Activated B cell treated with CpG ODN at 0.5 μM for 24 hours (primary cell): ENCODE measurements at regions of chr12 and their contacts with region 1.

Region 1: DNA sequence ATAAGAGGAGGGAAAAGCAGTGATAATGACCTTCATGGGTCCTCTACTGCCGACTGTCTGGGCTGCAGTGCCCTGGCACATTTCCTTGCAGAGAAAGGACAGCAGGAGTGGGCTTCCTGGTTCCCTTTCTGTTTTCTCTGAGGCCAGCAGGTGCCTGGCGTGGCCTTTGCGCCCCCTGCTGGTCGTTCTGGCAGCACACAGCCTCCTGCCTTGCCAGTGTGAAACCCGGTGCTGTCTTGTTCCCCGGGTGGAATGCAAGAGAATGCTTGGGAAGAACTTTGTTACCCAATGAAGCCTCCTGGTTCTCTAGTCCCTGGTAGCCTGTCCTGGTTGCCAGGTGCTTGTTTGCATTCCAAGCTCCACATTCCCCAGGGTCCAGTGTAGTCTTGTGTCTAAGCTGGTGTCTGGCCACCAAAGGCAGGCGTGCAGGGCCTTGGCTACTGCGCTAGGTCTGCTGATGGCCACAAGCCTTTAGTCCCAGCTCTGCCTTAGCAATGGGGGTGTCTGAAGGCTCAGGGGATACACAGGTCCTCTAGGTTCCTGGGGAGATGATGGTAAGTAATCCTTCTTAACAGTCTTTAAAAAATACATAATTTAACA is 1392.4 kb upstream of the TMEM132C start:
- DNase-seq: peak; percentile 41
- ATAC-seq: no peak
- H3K4me3 Mint-ChIP-seq: no peak overlapping the region
- H3K27ac Mint-ChIP-seq: no peak overlapping the region
- H3K4me1 Mint-ChIP-seq: no peaks in the 10 kb centered on the region
- H3K27me3 Mint-ChIP-seq: no peaks in the 10 kb centered on the region
- CTCF ChIP-seq: peak; percentile 35

Region 2: DNA sequence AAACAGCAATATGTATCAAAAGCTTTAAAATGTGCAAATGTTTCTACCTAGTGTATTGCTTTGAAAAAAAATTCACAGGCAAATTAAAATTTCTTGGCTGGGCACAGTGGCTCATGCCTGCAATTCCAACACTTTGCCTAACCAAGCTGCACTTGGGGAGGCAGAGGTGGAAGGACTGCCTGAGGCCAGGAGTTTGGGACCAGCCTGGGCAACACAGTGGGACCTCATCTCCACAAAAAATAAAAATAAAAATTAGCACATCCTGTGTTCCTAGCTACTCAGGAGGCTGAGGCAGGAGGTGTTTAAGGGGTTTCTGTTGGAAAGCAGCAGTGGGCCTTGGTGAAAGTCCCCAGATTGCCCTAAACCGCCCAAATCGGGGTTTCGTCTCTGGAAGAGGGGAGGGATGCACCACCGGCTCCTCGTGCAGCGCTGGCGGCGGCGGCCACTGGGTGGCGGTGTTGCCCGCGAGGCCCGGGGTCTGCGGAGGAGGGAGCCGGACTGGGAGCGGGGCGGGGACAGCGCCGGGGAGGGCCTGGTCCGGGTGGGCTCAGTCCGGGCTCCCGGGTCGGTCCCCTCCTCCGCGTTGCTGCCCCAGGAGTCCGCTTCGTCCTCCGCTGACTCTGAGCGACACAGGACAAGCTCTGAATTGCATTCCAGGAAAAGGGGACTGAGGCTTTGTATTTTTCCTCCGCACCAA is 1543.7 kb before region 1 on chr12:
- CTCF ChIA-PET with region 1: interaction called, 3 read pairs
- POLR2A ChIA-PET with region 1: no interaction called
- intact Hi-C with region 1: loop called (anchors 5 kb)
- DNase-seq: peak; percentile 37
- ATAC-seq: peak; percentile 49
- H3K4me3 Mint-ChIP-seq: no peak overlapping the region
- H3K27ac Mint-ChIP-seq: no peak overlapping the region
- H3K4me1 Mint-ChIP-seq: no peaks in the 10 kb centered on the region
- H3K27me3 Mint-ChIP-seq: peaks cover 28% of the 10 kb centered on the region
- CTCF ChIP-seq: no peak

Region 3: DNA sequence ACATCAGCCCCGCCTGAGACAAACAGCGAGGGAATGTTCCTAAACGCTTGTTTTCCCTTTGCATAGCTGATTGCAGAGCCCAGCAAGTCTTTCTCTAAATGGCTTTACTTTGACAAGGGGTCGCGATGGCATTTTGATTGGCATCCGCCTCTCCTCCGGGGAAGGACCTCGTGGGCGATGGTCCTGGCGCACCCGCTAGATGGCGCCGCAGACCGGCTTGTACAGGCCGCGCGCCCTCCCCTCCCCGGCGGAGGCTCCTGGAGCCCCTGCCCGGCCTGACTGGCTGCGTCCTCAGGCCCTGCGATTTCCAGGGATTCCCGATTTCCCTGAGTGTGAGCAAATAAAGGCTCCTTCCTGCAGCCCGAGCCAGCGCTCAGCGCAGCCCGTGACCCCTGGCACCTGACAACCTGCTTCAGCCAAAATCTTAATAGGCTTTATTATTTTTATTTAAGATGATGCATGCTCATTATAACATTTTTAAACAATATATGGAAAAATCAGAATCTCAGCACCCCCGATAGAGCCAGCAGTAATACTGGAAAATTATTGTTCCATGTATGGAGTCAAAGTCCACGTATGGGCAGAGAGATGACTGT is 1341.0 kb before region 1 on chr12:
- CTCF ChIA-PET with region 1: no interaction called
- POLR2A ChIA-PET with region 1: no interaction called
- intact Hi-C with region 1: loop called (anchors 5 kb)
- DNase-seq: no peak
- ATAC-seq: no peak
- H3K4me3 Mint-ChIP-seq: no peak overlapping the region
- H3K27ac Mint-ChIP-seq: no peak overlapping the region
- H3K4me1 Mint-ChIP-seq: no peaks in the 10 kb centered on the region
- H3K27me3 Mint-ChIP-seq: peaks cover 15% of the 10 kb centered on the region
- CTCF ChIP-seq: no peak

Region 4: DNA sequence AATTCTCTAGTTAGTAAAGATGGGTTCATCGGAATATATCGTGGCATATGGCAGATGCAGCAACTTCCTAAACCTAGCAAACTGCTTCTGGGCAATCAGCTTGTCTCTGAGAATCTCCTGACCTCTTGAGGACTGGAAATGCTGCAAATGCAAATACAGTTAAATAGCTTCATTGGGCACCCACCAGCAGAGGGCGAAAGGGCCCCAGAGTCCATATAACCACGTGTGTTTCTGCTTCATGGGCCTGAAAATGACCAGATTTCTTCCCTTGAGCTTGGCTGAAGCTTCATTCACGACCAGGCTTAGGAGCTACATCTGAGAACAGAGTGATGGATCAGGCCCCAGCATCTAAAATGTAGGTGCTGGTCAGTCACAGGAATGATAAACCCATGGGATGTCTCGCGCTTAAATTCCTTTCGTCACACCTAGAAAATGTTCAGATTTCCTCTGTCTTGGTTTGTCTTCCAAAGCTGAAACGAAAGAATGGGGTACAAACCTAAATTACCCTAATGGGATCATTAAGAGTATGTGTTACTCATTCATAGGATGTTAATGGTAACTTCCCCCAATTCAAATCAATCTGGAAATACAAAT is 90.1 kb before region 1 on chr12:
- CTCF ChIA-PET with region 1: no interaction called
- POLR2A ChIA-PET with region 1: no interaction called
- intact Hi-C with region 1: loop called (anchors 1 kb)
- DNase-seq: no peak
- ATAC-seq: no peak
- H3K4me3 Mint-ChIP-seq: no peak overlapping the region
- H3K27ac Mint-ChIP-seq: no peak overlapping the region
- H3K4me1 Mint-ChIP-seq: no peaks in the 10 kb centered on the region
- H3K27me3 Mint-ChIP-seq: no peaks in the 10 kb centered on the region
- CTCF ChIP-seq: no peak